Head of caudate nucleus (tissue), 42 donors: ENCODE measurements at regions of chr4 and their contacts with region 1.

Region 1: GRCh38 chr4:155953151-155954114 is at the start of gene CTSO:
- DNase-seq: peak; percentile 57 to 93 (median 82)

Region 2: DNA sequence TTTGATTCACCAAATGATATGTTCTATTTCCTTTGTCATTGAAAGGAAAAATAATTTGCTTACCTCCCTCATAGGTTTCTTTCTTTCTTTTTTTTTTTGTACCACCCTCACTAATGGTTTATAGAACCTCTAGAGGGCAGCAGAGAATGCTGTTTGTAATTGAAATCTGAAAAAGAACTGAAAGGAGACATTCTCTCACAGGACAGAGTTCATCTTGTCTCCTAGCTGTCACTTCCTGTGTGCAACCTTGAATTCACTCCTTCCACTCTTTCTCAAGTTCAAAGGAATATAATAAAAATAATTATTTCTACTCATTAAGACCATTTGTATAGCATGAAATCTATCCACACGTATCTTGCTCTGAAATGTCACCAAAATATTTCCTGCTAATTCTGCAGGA is 143.6 kb before region 1 on chr4:
- intact Hi-C with region 1: loop called (anchors 10 kb)
- DNase-seq: peak in 11 of 42 donors; percentile 15 to 56 (median 23)